GM10248 (cell line): ENCODE measurements at regions of chr2 and their contacts with region 1.

Region 1: GRCh38 chr2:144288438-144288837 is 231.5 kb downstream of the ZEB2 start:
- DNase-seq: no peak
- CTCF ChIP-seq: no peak

Region 2: DNA sequence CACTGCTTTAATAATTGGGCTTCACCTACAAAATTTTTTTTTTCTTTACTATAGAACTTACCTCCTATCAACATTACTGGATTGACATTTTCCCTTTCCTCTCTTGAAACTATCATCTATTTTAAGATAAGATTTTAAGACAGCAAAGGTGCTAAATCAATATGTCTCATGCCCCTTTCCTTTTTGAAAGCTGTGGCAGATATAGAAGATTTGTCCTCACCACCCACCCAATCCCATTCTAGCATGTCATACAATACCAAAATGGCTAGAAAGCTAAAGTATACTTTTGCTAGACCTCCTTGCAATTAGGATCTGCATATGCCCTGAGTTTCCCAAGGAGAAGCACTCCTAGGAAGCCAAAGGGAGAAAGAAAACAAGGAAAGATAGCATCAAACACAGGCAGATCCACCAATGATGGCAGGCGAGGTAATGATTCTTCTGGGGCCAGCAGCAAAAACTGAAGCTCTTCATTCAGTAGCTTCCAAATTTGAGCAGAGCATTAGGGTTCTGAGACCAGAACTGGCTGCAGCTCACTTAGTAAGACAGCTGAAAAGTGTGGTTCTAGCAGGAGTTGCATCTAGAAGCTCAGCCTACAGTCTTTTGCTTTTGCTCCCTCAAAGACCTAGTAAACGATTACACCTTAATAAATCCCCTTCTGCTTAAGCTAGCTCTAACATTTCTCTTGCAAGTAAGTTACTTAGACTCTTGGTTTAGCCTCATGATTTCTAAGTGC is 10.7 kb before region 1 on chr2:
- CTCF ChIA-PET with region 1: interaction called, 13 read pairs
- POLR2A ChIA-PET with region 1: no interaction called
- DNase-seq: no peak
- CTCF ChIP-seq: no peak

Region 3: DNA sequence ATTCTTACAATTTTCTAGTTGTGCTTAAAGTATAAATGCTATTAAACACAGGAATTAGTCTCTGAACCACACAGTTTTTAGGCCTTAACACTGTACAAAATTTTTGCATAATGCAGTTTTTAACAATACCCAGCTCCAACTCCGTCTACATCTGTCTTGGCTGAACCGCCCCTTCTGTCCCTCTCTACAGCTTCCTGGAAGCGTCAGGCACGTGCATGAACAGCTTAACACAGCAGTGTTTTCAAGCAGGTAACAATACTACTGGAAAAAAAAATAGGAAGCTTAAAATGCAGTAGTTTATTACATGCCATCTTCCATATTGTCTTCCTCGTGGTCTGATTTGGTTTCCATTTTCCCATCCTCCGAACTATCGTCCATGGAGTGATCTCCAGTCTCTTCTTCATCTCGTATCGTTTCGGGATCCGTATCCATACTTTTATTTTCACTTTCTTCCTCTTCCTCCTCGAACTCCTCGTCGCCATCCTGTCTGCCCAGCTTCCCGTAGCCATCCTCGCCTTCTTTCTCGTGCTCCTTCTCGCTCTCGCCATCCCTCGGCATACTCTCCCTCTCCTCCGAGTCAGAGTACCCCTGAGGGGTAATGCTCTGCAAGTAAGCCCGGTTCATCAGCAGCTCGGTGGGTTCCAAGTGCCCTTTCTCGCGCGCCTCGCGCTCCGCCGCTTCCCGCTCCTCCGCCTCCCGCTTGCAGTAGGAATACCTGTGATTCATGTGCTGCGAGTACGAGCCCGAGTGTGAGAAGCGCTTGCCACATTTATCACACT is 100.9 kb after region 1 on chr2:
- CTCF ChIA-PET with region 1: no interaction called
- POLR2A ChIA-PET with region 1: no interaction called
- DNase-seq: no peak
- CTCF ChIP-seq: no peak